Common myeloid progenitor, CD34-positive (primary cell): ENCODE measurements at regions of chr14 and their contacts with region 1.

Region 1: DNA sequence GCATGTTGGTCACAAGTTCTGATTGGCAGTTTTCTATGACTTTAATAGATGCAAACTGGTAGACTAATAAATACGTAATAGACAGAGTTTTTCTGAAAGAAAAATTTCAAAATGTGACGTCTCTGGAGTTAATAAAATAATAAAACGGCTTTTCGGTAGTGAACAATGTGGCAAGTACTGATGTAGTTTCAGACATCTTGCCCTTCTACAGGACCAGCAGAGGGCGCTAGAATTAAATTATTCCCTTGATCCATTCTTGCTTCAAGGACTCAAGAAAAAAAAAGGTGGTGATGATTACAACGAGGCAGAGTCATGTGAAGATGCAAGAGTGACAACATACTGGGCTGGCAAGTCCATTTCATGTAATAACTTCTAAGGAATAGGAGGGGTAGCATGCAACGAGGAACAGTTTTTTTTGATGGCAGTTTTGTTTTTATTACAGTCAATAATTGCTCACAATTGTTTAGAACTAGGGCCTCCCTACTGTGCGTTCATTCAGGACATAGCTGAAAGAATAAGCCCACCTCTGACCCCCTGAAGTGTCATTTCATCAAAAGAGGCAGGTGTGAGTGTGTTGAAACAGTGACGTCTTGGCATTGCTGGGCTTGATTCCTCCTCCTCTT is 101.0 kb upstream of the GZMB start:
- DNase-seq: peak; percentile 83 to 91 (median 87)
- H3K4me3 ChIP-seq: no peak overlapping the region
- H3K27ac ChIP-seq: no peak overlapping the region
- H3K4me1 ChIP-seq: no peaks in the 10 kb centered on the region
- H3K27me3 ChIP-seq: no peaks in the 10 kb centered on the region

Region 2: GRCh38 chr14:25132732-25133422 is 397.9 kb after region 1 on chr14:
- CTCF ChIA-PET with region 1: interaction called, 10 read pairs
- POLR2A ChIA-PET with region 1: no interaction called
- DNase-seq: peak; percentile 54 to 71 (median 71)
- H3K4me3 ChIP-seq: peak overlapping the region in 2 of 7 experiments; percentile 14 to 40
- H3K27ac ChIP-seq: no peak overlapping the region
- H3K4me1 ChIP-seq: peaks cover 0 to 6% (median 2%) of the 10 kb centered on the region in 4 experiments
- H3K27me3 ChIP-seq: peaks cover 3 to 41% (median 7%) of the 10 kb centered on the region in 5 experiments